Esophagus muscularis mucosa (tissue), 4 donors: ENCODE measurements at regions of chr6 and their contacts with region 1.

Region 1: GRCh38 chr6:113858480-113859348 is 1.6 kb downstream of the MARCKS start:
- DNase-seq: no peak
- H3K4me3 ChIP-seq: peak overlapping the region; percentile 65 to 81 (median 73)
- H3K27ac ChIP-seq: peak overlapping the region; percentile 90 to 97 (median 94)
- H3K4me1 ChIP-seq: peaks cover 4 to 44% (median 39%) of the 10 kb centered on the region in 4 donors
- H3K27me3 ChIP-seq: no peaks in the 10 kb centered on the region
- CTCF ChIP-seq: peak; percentile 94 to 99 (median 99)
- EP300 ChIP-seq: no peak
- POLR2A ChIP-seq: peak; percentile 10

Region 2: GRCh38 chr6:112780498-112781096 is 1078.1 kb before region 1 on chr6:
- intact Hi-C with region 1: loop called (anchors 5 kb)
- DNase-seq: no peak
- H3K4me3 ChIP-seq: no peak overlapping the region
- H3K27ac ChIP-seq: no peak overlapping the region
- H3K4me1 ChIP-seq: no peaks in the 10 kb centered on the region
- H3K27me3 ChIP-seq: no peaks in the 10 kb centered on the region
- CTCF ChIP-seq: peak; percentile 81 to 84 (median 83)
- EP300 ChIP-seq: no peak
- POLR2A ChIP-seq: no peak

Region 3: GRCh38 chr6:113306552-113307145 is 552.1 kb before region 1 on chr6:
- intact Hi-C with region 1: loop called (anchors 2 kb)
- DNase-seq: peak; percentile 93
- H3K4me3 ChIP-seq: no peak overlapping the region
- H3K27ac ChIP-seq: no peak overlapping the region
- H3K4me1 ChIP-seq: no peaks in the 10 kb centered on the region
- H3K27me3 ChIP-seq: no peaks in the 10 kb centered on the region
- CTCF ChIP-seq: peak; percentile 58 to 74 (median 62)
- EP300 ChIP-seq: no peak
- POLR2A ChIP-seq: no peak

Region 4: GRCh38 chr6:113317881-113318574 is 540.7 kb before region 1 on chr6:
- intact Hi-C with region 1: no loop called
- DNase-seq: no peak
- H3K4me3 ChIP-seq: no peak overlapping the region
- H3K27ac ChIP-seq: no peak overlapping the region
- H3K4me1 ChIP-seq: peaks cover 0 to 8% (median 0%) of the 10 kb centered on the region in 4 donors
- H3K27me3 ChIP-seq: no peaks in the 10 kb centered on the region
- CTCF ChIP-seq: no peak
- EP300 ChIP-seq: no peak
- POLR2A ChIP-seq: no peak

Region 5: GRCh38 chr6:113414511-113414910 is 444.2 kb before region 1 on chr6:
- intact Hi-C with region 1: loop called (anchors 5 kb)
- DNase-seq: no peak
- H3K4me3 ChIP-seq: no peak overlapping the region
- H3K27ac ChIP-seq: no peak overlapping the region
- H3K4me1 ChIP-seq: peaks cover 0 to 8% (median 5%) of the 10 kb centered on the region in 4 donors
- H3K27me3 ChIP-seq: no peaks in the 10 kb centered on the region
- CTCF ChIP-seq: peak; percentile 44 to 62 (median 46)
- EP300 ChIP-seq: no peak
- POLR2A ChIP-seq: no peak

Region 6: DNA sequence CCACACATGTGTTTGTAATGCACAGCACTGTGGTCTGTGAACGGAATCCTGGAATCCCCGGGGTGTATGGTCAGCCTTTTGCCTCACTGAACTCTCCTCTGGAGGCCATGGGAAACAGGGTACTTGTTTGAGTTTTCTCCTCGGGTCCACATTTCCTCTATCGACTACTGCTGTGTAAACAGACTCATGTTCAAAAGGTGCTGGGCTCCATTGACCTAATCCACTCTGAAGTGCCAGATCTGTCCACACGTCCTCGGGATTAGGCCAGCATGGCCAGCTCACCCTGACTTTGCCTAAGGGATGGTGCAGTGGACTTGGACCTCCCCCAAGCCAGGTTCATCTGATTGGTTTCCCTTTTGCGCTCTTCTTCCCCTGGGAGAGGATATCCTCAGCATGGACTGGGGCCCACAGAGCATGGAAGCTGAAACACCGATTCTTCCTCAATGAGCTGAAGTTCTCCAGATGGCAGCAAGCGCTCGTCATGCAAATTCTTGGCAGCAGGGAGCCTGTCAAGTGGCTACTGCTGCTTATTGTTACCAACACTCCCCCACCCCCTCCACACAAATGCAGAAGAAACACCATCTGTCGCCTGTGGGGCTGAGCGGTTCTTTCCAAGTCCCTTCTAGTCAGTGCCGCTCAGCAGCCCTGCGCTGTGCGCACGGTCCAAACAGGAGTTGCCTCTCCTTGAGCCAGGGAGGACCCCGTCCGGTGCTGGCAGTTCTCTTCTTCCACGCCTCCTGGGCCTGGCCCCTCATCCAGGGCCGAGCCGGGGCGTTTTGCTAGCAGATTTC is 294.1 kb before region 1 on chr6:
- intact Hi-C with region 1: loop called (anchors 10 kb)
- DNase-seq: peak; percentile 94
- H3K4me3 ChIP-seq: peak overlapping the region; percentile 44 to 51 (median 48)
- H3K27ac ChIP-seq: peak overlapping the region; percentile 68 to 82 (median 72)
- H3K4me1 ChIP-seq: peaks cover 2 to 20% (median 17%) of the 10 kb centered on the region in 4 donors
- H3K27me3 ChIP-seq: no peaks in the 10 kb centered on the region
- CTCF ChIP-seq: peak in 2 of 3 experiments; percentile 17 to 28
- EP300 ChIP-seq: peak; percentile 42
- POLR2A ChIP-seq: no peak

Region 7: GRCh38 chr6:113662688-113663333 is 195.9 kb before region 1 on chr6:
- intact Hi-C with region 1: no loop called
- DNase-seq: no peak
- H3K4me3 ChIP-seq: no peak overlapping the region
- H3K27ac ChIP-seq: no peak overlapping the region
- H3K4me1 ChIP-seq: no peaks in the 10 kb centered on the region
- H3K27me3 ChIP-seq: no peaks in the 10 kb centered on the region
- CTCF ChIP-seq: no peak
- EP300 ChIP-seq: no peak
- POLR2A ChIP-seq: no peak